Heart left ventricle (tissue), 16 donors: ENCODE measurements at regions of chr18 and their contacts with region 1.

Region 1: DNA sequence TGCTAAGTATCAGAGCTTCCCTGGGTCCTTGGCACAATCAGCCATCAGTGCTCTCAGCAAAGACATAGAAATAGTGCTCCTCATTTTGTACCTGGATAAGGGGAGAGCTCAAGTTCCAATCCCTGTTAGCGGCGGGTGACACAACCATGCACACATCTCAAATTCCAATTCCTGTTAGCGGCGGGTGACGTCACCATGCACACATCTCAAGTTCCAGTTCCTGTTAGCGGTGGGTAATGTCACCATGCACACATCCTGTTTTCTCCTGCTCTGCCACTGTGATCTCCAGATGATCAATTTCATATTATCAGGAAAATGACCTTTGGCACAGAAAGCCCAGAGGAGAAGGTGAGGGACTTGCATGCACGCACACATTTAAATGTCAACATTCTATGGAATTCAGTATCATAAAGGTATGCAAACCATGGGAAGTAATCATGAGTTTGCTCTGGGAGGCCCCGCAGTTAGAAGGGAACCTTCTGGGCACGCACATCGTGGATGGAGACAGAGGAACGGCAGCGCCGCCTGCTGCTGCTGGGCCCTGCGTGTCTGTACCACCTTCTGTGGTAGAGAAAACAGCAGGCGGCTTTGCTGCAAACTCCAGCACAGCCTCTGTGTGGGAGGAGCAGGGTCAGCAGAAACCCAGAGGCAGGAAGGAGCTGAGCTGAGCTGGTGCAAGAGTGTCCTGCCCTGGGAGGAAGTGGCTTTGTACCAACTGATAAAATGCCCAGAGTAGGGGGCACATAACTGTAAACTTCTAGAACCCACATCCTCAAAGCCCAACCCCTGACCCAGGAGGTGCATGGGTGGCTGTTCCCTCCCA is 77.8 kb downstream of the MBP start:
- DNase-seq: peak; percentile 80 to 91 (median 88)
- ATAC-seq: peak; percentile 62 to 86 (median 80)
- H3K4me3 ChIP-seq: peak overlapping the region in 2 of 12 donors; percentile 10 to 39
- H3K27ac ChIP-seq: peak overlapping the region; percentile 53 to 99 (median 78)
- H3K4me1 ChIP-seq: peaks cover 0 to 79% (median 53%) of the 10 kb centered on the region in 12 donors
- H3K27me3 ChIP-seq: no peaks in the 10 kb centered on the region
- CTCF ChIP-seq: peak; percentile 37 to 80 (median 58)
- POLR2A ChIP-seq: no peak

Region 2: GRCh38 chr18:76822510-76823160 is 232.2 kb before region 1 on chr18 and contains the start of gene ZNF236:
- intact Hi-C with region 1: loop called in 1 of 10 experiments (anchors 10 kb)
- DNase-seq: peak; percentile 79 to 89 (median 85)
- ATAC-seq: peak in 3 of 4 donors; percentile 64 to 87 (median 81)
- H3K4me3 ChIP-seq: peak within 1 kb of the TSS; percentile 71 to 99 (median 94)
- H3K27ac ChIP-seq: peak within 1 kb of the TSS; percentile 93 to 99 (median 97)
- H3K4me1 ChIP-seq: peaks cover 5 to 45% (median 19%) of the 10 kb centered on the region in 12 donors
- H3K27me3 ChIP-seq: no peaks in the 10 kb centered on the region
- CTCF ChIP-seq: no peak
- POLR2A ChIP-seq: peak in 1 of 2 donors; percentile 69
- total RNA-seq, gene ZNF236: 7.9 to 17.0 (median 10.9) TPM

Region 3: GRCh38 chr18:77000527-77000926 is 54.3 kb before region 1 on chr18:
- intact Hi-C with region 1: loop called in 9 of 10 experiments (anchors 2 to 5 kb)
- DNase-seq: peak in 3 of 5 donors; percentile 50 to 64 (median 52)
- ATAC-seq: no peak
- H3K4me3 ChIP-seq: peak overlapping the region in 7 of 12 donors; percentile 6 to 49 (median 29)
- H3K27ac ChIP-seq: peak overlapping the region in 2 of 12 donors; percentile 27 to 35
- H3K4me1 ChIP-seq: peaks cover 0 to 29% (median 0%) of the 10 kb centered on the region in 12 donors
- H3K27me3 ChIP-seq: no peaks in the 10 kb centered on the region
- CTCF ChIP-seq: peak; percentile 87 to 99 (median 96)
- POLR2A ChIP-seq: no peak

Region 4: GRCh38 chr18:77006305-77007175 is 48.3 kb before region 1 on chr18:
- intact Hi-C with region 1: loop called (anchors 2 to 5 kb)
- DNase-seq: no peak
- ATAC-seq: peak; percentile 39 to 70 (median 52)
- H3K4me3 ChIP-seq: no peak overlapping the region
- H3K27ac ChIP-seq: peak overlapping the region in 4 of 12 donors; percentile 10 to 90 (median 26)
- H3K4me1 ChIP-seq: peaks cover 0 to 41% (median 2%) of the 10 kb centered on the region in 12 donors
- H3K27me3 ChIP-seq: no peaks in the 10 kb centered on the region
- CTCF ChIP-seq: no peak
- POLR2A ChIP-seq: no peak

Region 5: DNA sequence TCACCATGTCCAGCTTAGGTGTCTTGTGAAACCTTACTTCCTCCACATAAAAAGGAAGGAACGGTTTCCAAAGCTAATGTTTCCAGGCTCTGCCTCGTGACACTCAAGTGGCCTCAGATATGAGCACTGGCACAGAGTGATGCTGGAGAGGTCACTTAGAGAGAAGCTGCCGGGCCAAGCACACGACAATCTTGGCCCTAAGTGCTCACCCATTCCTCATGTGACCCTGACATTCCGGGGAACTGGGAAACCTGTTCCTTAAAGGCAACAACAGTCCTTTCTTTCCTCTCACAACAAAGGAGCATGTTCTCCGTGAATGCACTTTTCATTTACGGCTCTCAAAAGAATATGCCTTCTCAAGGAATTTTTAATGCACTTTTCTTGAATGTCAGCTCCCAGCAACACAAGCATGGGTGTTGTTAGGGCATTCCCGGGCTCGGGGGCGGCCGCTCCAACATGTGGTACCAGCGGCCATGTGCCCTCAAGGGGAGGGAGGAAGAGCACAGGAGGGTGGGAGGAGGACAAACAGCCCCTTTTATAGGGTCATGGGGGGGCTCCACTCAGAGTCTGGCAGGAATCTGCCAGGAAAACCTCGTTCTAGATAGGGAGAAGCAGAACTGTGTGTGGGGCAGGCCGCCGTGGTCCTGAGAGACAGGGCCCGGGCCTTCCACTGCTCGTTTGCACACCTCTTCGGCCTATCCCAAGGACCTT is 40.9 kb before region 1 on chr18:
- intact Hi-C with region 1: loop called in 1 of 10 experiments (anchors 5 kb)
- DNase-seq: peak in 4 of 5 donors; percentile 52 to 86 (median 70)
- ATAC-seq: peak; percentile 95 to 98 (median 97)
- H3K4me3 ChIP-seq: peak overlapping the region in 2 of 12 donors; percentile 15 to 19
- H3K27ac ChIP-seq: peak overlapping the region; percentile 54 to 93 (median 82)
- H3K4me1 ChIP-seq: peaks cover 0 to 42% (median 29%) of the 10 kb centered on the region in 12 donors
- H3K27me3 ChIP-seq: no peaks in the 10 kb centered on the region
- CTCF ChIP-seq: no peak
- POLR2A ChIP-seq: no peak

Region 6: DNA sequence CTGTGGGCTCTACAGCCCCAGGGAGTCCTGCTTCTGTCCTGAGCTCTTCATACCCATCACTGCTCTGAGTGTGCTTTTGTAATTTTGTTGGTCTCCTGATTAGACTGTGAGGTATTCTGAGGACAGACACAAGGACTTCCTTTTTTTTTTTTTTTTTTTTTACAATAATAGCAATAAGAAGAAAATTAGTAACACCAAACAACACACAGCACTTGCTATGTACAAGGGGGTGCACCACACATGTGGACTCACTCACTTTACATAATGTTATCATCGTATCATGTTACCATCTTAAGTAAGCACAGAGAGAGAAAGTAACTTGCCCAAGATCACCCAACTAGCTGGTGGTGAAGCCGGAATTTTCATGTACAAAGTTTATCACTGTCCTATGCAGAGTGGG is 43.2 kb after region 1 on chr18:
- intact Hi-C with region 1: no loop called
- DNase-seq: no peak
- ATAC-seq: peak in 1 of 4 donors; percentile 9
- H3K4me3 ChIP-seq: peak overlapping the region in 2 of 12 donors; percentile 3 to 47
- H3K27ac ChIP-seq: peak overlapping the region in 8 of 12 donors; percentile 8 to 81 (median 58)
- H3K4me1 ChIP-seq: peaks cover 0 to 82% (median 48%) of the 10 kb centered on the region in 12 donors
- H3K27me3 ChIP-seq: no peaks in the 10 kb centered on the region
- CTCF ChIP-seq: no peak
- POLR2A ChIP-seq: no peak

Region 7: GRCh38 chr18:77108001-77108692 is 53.3 kb after region 1 on chr18:
- intact Hi-C with region 1: loop called in 1 of 10 experiments (anchors 5 kb)
- DNase-seq: peak in 4 of 5 donors; percentile 39 to 66 (median 63)
- ATAC-seq: peak; percentile 44 to 74 (median 59)
- H3K4me3 ChIP-seq: peak overlapping the region in 7 of 12 donors; percentile 0 to 29 (median 11)
- H3K27ac ChIP-seq: peak overlapping the region; percentile 44 to 95 (median 77)
- H3K4me1 ChIP-seq: peaks cover 0 to 100% (median 38%) of the 10 kb centered on the region in 12 donors
- H3K27me3 ChIP-seq: no peaks in the 10 kb centered on the region
- CTCF ChIP-seq: no peak
- POLR2A ChIP-seq: no peak

Region 8: DNA sequence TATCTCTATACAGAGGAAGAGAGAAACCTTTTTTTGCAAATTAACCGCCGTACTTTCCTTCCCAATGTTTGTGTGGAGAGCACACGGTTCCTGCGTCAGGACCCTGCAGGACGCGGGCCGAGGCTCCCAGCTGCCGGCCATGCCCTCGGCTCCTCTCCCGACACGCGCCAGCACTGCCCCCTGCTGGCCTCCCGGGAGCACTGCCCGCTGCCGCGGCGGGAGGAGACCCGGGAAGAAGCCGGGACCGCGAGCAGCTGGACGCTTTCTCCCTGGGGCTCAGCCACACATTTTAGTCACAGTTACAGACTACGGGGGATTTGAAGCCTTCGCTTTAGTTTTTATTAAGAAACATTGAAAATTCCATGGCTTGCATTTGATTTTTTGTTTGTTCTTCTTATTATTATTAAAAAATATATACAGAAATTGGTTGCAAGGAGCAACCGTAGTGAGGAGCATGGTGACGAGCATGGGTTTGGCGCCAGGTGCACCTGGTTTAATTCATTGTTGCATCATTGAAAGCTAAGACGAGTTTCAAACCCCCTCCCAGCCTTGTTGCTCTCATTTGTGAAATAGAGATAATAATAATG is 596.1 kb after region 1 on chr18:
- intact Hi-C with region 1: loop called in 1 of 10 experiments (anchors 5 kb)
- DNase-seq: peak; percentile 71 to 89 (median 74)
- ATAC-seq: peak; percentile 65 to 98 (median 91)
- H3K4me3 ChIP-seq: peak overlapping the region in 1 of 12 donors; percentile 2
- H3K27ac ChIP-seq: no peak overlapping the region
- H3K4me1 ChIP-seq: peaks cover 0 to 8% (median 0%) of the 10 kb centered on the region in 12 donors
- H3K27me3 ChIP-seq: peaks cover 0 to 18% (median 4%) of the 10 kb centered on the region in 9 donors
- CTCF ChIP-seq: peak; percentile 75 to 95 (median 88)
- POLR2A ChIP-seq: no peak